Activated B cell treated with CpG ODN at 0.5 μM for 24 hours (primary cell): ENCODE measurements at regions of chr11 and their contacts with region 1.

Region 1: DNA sequence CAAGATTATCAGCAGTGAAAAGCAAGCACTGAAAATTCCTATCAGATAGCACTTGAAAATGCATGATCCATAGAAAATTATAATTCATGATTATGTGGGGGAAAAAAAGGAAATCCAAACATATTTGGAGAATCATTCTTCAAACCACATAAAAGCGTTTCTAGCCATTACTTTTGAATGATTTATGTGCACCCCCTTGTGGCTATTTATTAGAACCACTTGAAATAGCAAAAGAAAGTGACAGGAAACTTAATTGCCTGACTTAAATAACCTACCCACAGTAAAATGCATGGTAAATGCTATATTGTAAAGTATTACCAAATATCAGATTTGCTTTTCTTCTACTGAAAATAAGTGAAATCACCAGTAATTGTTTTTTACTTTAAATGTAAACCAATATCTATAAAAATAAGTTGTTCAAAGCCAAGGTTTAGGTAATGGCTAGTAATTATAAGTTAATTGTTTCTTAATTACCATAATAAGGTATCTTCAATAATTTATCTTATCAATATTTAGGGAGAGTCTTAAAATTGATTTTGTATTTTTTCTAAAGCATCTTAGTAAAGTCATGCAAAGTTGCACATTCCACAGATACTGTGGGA is 168.5 kb downstream of the ARHGAP42 start:
- DNase-seq: no peak
- ATAC-seq: no peak
- H3K4me3 Mint-ChIP-seq: no peak overlapping the region
- H3K27ac Mint-ChIP-seq: no peak overlapping the region
- H3K4me1 Mint-ChIP-seq: no peaks in the 10 kb centered on the region
- H3K27me3 Mint-ChIP-seq: no peaks in the 10 kb centered on the region
- CTCF ChIP-seq: peak; percentile 66

Region 2: DNA sequence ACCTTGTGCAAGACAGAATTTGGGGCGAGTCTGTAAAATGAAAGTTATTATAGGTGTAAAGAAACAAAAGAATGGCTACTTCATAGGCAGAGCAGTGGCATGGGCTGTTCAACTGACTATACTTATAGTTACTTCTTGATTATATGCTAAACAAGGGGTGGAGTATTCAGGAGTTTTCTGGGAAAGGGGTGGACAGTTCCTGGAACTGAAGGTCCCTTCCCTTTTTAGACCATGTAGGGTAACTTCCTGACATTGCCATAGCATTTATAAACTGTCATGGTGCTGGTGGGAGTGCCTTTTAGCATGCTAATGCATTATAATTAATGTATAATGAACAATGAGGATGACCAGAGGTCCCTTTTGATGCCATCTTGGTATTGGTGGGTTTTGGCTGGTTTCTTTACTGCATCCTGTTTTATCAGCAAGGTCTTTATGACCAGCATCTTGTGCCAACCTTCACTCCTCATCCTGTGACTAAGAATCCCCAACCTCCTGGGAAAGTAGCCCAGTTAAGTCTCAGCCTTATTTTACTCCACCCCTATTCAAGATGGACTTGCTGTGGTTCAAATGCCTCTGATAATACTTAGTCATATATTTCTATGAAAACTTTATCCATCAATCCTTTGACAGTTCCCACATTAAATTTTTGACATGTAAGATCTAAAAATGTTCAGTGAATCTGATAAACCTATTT is 49.9 kb before region 1 on chr11:
- CTCF ChIA-PET with region 1: no interaction called
- POLR2A ChIA-PET with region 1: no interaction called
- intact Hi-C with region 1: no loop called
- DNase-seq: no peak
- ATAC-seq: no peak
- H3K4me3 Mint-ChIP-seq: no peak overlapping the region
- H3K27ac Mint-ChIP-seq: no peak overlapping the region
- H3K4me1 Mint-ChIP-seq: no peaks in the 10 kb centered on the region
- H3K27me3 Mint-ChIP-seq: no peaks in the 10 kb centered on the region
- CTCF ChIP-seq: no peak

Region 3: GRCh38 chr11:100872951-100873740 is 17.6 kb after region 1 on chr11:
- CTCF ChIA-PET with region 1: no interaction called
- POLR2A ChIA-PET with region 1: no interaction called
- intact Hi-C with region 1: loop called (anchors 2 kb)
- DNase-seq: no peak
- ATAC-seq: no peak
- H3K4me3 Mint-ChIP-seq: no peak overlapping the region
- H3K27ac Mint-ChIP-seq: no peak overlapping the region
- H3K4me1 Mint-ChIP-seq: no peaks in the 10 kb centered on the region
- H3K27me3 Mint-ChIP-seq: no peaks in the 10 kb centered on the region
- CTCF ChIP-seq: no peak

Region 4: DNA sequence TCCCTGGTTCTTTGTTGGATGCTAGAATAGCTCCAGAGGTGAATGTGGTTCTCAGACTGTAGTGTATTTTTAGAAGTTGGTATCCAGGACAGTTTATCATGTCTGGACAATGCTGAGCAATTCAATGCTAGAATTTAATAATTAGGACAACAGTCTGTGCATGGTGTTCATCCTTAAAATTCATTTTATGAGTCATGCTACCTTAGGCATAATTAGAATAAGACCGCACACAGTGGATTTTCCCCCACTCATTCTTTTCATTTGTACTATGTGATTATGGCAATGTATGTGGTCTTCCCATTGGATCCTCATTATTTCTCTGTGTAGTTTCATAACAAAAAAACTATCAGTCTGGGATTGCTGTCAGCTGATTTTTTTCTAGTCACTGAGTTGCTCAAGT is 28.3 kb after region 1 on chr11:
- CTCF ChIA-PET with region 1: no interaction called
- POLR2A ChIA-PET with region 1: no interaction called
- intact Hi-C with region 1: no loop called
- DNase-seq: no peak
- ATAC-seq: no peak
- H3K4me3 Mint-ChIP-seq: no peak overlapping the region
- H3K27ac Mint-ChIP-seq: no peak overlapping the region
- H3K4me1 Mint-ChIP-seq: no peaks in the 10 kb centered on the region
- H3K27me3 Mint-ChIP-seq: no peaks in the 10 kb centered on the region
- CTCF ChIP-seq: no peak

Region 5: GRCh38 chr11:100930185-100930778 is 74.7 kb after region 1 on chr11:
- CTCF ChIA-PET with region 1: no interaction called
- POLR2A ChIA-PET with region 1: no interaction called
- intact Hi-C with region 1: loop called (anchors 1 kb)
- DNase-seq: no peak
- ATAC-seq: no peak
- H3K4me3 Mint-ChIP-seq: no peak overlapping the region
- H3K27ac Mint-ChIP-seq: no peak overlapping the region
- H3K4me1 Mint-ChIP-seq: peaks cover 10% of the 10 kb centered on the region
- H3K27me3 Mint-ChIP-seq: no peaks in the 10 kb centered on the region
- CTCF ChIP-seq: no peak